ENCODE measurements at regions of chr6 and their contacts with region 1.

Region 1: GRCh38 chr6:35342258-35343091 is at the start of gene PPARD:
- DNase-seq: peak; percentile 97
- H3K4me3 ChIP-seq: peak within 1 kb of the TSS; percentile 47 to 75 (median 70)
- H3K27ac ChIP-seq: peak within 1 kb of the TSS; percentile 58
- H3K4me1 ChIP-seq: peaks cover 14% of the 10 kb centered on the region
- H3K27me3 ChIP-seq: peaks cover 0 to 4% of the 10 kb centered on the region in 2 experiments
- CTCF ChIP-seq: peak; percentile 95 to 97
- POLR2A ChIP-seq: peak; percentile 74
- total RNA-seq, gene PPARD: 23.4 and 29.2 TPM in 2 replicates

Region 2: GRCh38 chr6:35297601-35298481 is 44.6 kb before region 1 on chr6 and contains the start of gene DEF6:
- CTCF ChIA-PET with region 1: interaction called, 11 read pairs
- POLR2A ChIA-PET with region 1: no interaction called
- dilution Hi-C with region 1: no loop called
- intact Hi-C with region 1: loop called (anchors 1 kb)
- DNase-seq: peak; percentile 80
- H3K4me3 ChIP-seq: no peak within 1 kb of the TSS
- H3K27ac ChIP-seq: peak within 1 kb of the TSS; percentile 27
- H3K4me1 ChIP-seq: peaks cover 14% of the 10 kb centered on the region
- H3K27me3 ChIP-seq: no peaks in the 10 kb centered on the region
- CTCF ChIP-seq: peak; percentile 74 to 82
- POLR2A ChIP-seq: no peak
- total RNA-seq, gene DEF6: 0.77 and 1.0 TPM in 2 replicates

Region 3: GRCh38 chr6:35370124-35370741 is 27.8 kb after region 1 on chr6:
- CTCF ChIA-PET with region 1: interaction called, 3 read pairs
- POLR2A ChIA-PET with region 1: no interaction called
- dilution Hi-C with region 1: no loop called
- intact Hi-C with region 1: loop called (anchors 1 kb)
- DNase-seq: peak; percentile 83
- H3K4me3 ChIP-seq: no peak overlapping the region
- H3K27ac ChIP-seq: peak overlapping the region; percentile 82
- H3K4me1 ChIP-seq: peaks cover 34% of the 10 kb centered on the region
- H3K27me3 ChIP-seq: no peaks in the 10 kb centered on the region
- CTCF ChIP-seq: no peak
- POLR2A ChIP-seq: no peak

Region 4: DNA sequence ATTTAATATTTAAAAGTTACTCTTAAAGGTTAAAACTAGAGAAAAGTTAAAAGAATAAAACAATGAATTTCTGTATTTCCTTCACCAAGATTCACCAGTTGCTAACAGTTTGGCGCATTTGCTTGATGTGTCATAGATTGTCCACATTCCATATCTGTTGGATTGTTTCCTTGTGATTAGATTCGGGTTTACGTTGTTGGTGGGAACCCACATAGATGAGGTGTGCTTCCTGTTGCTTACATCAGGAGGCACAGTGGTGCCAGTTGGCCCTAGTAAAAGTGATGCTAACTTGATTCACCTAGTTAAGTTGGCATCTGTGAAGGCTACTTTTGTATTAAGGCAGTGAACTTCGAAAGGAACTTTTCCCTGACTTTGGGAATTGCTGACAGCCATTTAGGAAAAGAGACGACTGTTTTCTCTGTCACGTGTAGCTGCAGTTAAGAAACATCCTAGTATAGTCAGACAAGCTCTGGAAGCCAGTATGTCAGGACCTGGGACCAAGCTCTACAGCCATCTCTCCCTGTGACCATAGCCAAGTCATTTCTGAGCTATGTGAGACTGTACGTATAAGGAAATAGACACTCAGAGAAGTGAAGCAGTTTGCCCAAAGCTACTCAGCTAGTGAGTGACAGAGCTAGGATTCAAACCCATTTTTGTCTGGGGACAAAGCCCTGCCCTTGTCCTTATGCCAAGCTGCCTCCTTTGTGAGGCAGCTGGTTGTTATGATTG is 48.9 kb after region 1 on chr6:
- CTCF ChIA-PET with region 1: interaction called, 5 read pairs
- POLR2A ChIA-PET with region 1: no interaction called
- dilution Hi-C with region 1: no loop called
- intact Hi-C with region 1: loop called (anchors 1 kb)
- DNase-seq: peak; percentile 88
- H3K4me3 ChIP-seq: no peak overlapping the region
- H3K27ac ChIP-seq: peak overlapping the region; percentile 93
- H3K4me1 ChIP-seq: peaks cover 38% of the 10 kb centered on the region
- H3K27me3 ChIP-seq: no peaks in the 10 kb centered on the region
- CTCF ChIP-seq: no peak
- POLR2A ChIP-seq: peak; percentile 42

Region 5: GRCh38 chr6:35415065-35415991 is 72.9 kb after region 1 on chr6:
- CTCF ChIA-PET with region 1: interaction called, 38 read pairs
- POLR2A ChIA-PET with region 1: no interaction called
- dilution Hi-C with region 1: no loop called
- intact Hi-C with region 1: loop called (anchors 1 kb)
- DNase-seq: peak; percentile 44
- H3K4me3 ChIP-seq: no peak overlapping the region
- H3K27ac ChIP-seq: no peak overlapping the region
- H3K4me1 ChIP-seq: peaks cover 13% of the 10 kb centered on the region
- H3K27me3 ChIP-seq: no peaks in the 10 kb centered on the region
- CTCF ChIP-seq: peak; percentile 5 to 36
- POLR2A ChIP-seq: no peak

Region 6: DNA sequence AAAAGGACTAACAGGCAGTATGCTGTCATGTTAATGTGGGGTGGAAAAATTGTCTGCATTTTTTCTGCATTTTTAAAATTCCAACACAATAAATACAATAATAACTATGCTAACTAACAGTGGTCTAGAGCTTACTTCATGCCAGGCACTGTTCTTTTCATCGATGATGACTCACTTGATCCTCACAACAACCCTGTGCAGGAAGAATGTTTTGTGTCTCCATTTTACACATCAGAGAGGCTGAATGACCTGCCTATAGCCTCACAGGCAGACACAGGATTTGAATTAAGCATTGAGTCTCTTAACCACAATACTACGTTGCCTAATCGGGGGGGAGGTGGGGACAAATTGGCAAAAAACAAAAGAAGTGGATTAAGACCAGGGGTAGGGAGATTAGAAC is 82.8 kb after region 1 on chr6:
- CTCF ChIA-PET with region 1: interaction called, 28 read pairs
- POLR2A ChIA-PET with region 1: interaction called, 5 read pairs
- dilution Hi-C with region 1: no loop called
- intact Hi-C with region 1: loop called (anchors 1 kb)
- DNase-seq: peak; percentile 92
- H3K4me3 ChIP-seq: no peak overlapping the region
- H3K27ac ChIP-seq: peak overlapping the region; percentile 98
- H3K4me1 ChIP-seq: peaks cover 48% of the 10 kb centered on the region
- H3K27me3 ChIP-seq: no peaks in the 10 kb centered on the region
- CTCF ChIP-seq: no peak
- POLR2A ChIP-seq: no peak

Region 7: DNA sequence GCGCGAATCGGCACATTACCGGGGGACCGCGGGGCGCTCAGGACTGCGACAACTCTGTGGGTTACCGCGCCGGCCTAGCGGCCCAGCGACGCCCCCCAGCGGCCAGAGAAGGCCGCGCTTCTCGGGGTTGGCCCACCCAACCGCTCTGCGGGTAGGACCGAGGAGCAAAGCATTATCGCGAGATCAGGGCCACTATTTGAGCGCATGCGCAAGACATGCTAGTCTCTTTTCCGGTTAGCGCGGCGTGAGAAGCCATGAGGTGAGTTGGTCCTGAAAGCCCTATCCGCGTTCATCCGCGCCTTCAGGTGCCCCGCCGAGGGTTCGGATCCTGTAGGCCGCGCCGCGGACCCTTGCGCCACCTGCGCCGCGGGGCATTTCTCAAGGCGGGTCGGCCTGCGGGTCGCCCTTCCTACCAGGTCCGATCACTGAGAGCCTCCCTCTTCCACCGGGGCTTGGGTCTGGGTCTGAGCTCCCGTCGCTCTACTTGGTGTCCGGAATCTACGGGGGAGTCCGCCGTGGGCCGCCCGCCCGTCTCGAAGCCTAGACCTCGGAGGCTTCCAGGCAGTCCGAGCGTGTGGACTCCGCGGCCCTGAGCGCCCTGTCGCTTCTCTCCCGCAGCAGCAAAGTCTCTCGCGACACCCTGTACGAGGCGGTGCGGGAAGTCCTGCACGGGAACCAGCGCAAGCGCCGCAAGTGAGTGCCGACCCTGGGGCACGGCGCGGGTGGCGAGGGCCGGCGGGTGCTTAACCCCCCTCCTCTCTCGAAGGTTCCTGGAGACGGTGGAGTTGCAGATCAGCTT is 125.9 kb after region 1 on chr6 and contains the start of gene RPL10A:
- CTCF ChIA-PET with region 1: interaction called, 26 read pairs
- POLR2A ChIA-PET with region 1: interaction called, 3 read pairs
- dilution Hi-C with region 1: no loop called
- intact Hi-C with region 1: loop called (anchors 1 kb)
- DNase-seq: peak; percentile 97
- H3K4me3 ChIP-seq: peak within 1 kb of the TSS; percentile 69 to 95 (median 92)
- H3K27ac ChIP-seq: peak within 1 kb of the TSS; percentile 76
- H3K4me1 ChIP-seq: peaks cover 26% of the 10 kb centered on the region
- H3K27me3 ChIP-seq: no peaks in the 10 kb centered on the region
- CTCF ChIP-seq: peak; percentile 99 to 100
- POLR2A ChIP-seq: peak; percentile 100
- total RNA-seq, gene RPL10A: 1,327 and 1,339 TPM in 2 replicates

Measured in endothelial cell of umbilical vein (primary cell).